ENCODE measurements at regions of chr1 and their contacts with region 1.

Region 1: GRCh38 chr1:105793536-105794146 is 1262.8 kb upstream of the PRMT6 start:
- DNase-seq: no peak

Region 2: GRCh38 chr1:104780470-104781078 is 1013.1 kb before region 1 on chr1:
- intact Hi-C with region 1: loop called (anchors 10 kb)
- DNase-seq: no peak

Region 3: GRCh38 chr1:105678334-105678733 is 115.3 kb before region 1 on chr1:
- intact Hi-C with region 1: no loop called
- DNase-seq: no peak

Region 4: GRCh38 chr1:105730701-105731100 is 62.9 kb before region 1 on chr1:
- intact Hi-C with region 1: no loop called
- DNase-seq: no peak

Region 5: GRCh38 chr1:105874621-105875020 is 81.0 kb after region 1 on chr1:
- intact Hi-C with region 1: no loop called
- DNase-seq: no peak